ENCODE measurements at regions of chr21 and their contacts with region 1.

Region 1: GRCh38 chr21:39601187-39601928 is 11.4 kb upstream of the B3GALT5 start:
- DNase-seq: no peak
- ATAC-seq: peak in 3 of 4 donors; percentile 48 to 77 (median 51)
- H3K4me3 ChIP-seq: no peak overlapping the region
- H3K27ac ChIP-seq: no peak overlapping the region
- H3K4me1 ChIP-seq: peaks cover 0 to 5% (median 0%) of the 10 kb centered on the region in 12 donors
- H3K27me3 ChIP-seq: no peaks in the 10 kb centered on the region
- CTCF ChIP-seq: no peak
- POLR2A ChIP-seq: no peak

Region 2: GRCh38 chr21:39633770-39634181 is 32.4 kb after region 1 on chr21:
- intact Hi-C with region 1: no loop called
- DNase-seq: no peak
- ATAC-seq: no peak
- H3K4me3 ChIP-seq: no peak overlapping the region
- H3K27ac ChIP-seq: no peak overlapping the region
- H3K4me1 ChIP-seq: no peaks in the 10 kb centered on the region
- H3K27me3 ChIP-seq: peaks cover 0 to 7% (median 0%) of the 10 kb centered on the region in 9 donors
- CTCF ChIP-seq: no peak
- POLR2A ChIP-seq: no peak

Region 3: DNA sequence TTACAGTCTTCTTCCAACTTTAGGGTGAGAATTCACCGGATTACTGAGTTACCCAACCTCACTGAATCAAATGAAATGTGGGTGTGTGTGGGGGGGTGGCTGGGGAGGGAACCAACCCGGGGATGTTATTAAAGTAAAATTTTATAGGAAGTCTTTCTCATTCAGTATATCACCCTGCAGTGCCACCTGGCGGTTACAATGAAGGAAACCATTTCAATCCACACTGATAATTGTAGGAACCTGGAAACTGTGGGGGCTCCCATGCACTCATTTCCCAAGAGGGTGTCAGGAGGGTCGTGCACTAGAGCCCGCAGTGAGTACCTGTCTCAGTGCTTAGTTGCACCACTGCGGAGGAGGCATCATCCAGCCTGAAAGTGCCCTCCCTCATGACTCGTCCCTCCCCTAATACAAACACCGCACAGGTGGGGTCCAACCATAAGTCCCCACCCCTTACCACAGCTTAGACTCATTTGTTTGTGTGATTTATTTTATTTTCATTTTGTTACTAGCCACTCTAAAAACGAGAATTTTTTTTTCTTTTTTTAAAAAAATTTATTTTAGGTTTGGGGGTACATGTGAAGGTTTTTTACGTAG is 114.5 kb after region 1 on chr21:
- intact Hi-C with region 1: loop called in 1 of 10 experiments (anchors 10 kb)
- DNase-seq: peak in 4 of 5 donors; percentile 29 to 55 (median 33)
- ATAC-seq: peak in 2 of 4 donors; percentile 38
- H3K4me3 ChIP-seq: no peak overlapping the region
- H3K27ac ChIP-seq: no peak overlapping the region
- H3K4me1 ChIP-seq: peaks cover 0 to 5% (median 0%) of the 10 kb centered on the region in 12 donors
- H3K27me3 ChIP-seq: no peaks in the 10 kb centered on the region
- CTCF ChIP-seq: peak; percentile 53 to 81 (median 68)
- POLR2A ChIP-seq: no peak

Region 4: DNA sequence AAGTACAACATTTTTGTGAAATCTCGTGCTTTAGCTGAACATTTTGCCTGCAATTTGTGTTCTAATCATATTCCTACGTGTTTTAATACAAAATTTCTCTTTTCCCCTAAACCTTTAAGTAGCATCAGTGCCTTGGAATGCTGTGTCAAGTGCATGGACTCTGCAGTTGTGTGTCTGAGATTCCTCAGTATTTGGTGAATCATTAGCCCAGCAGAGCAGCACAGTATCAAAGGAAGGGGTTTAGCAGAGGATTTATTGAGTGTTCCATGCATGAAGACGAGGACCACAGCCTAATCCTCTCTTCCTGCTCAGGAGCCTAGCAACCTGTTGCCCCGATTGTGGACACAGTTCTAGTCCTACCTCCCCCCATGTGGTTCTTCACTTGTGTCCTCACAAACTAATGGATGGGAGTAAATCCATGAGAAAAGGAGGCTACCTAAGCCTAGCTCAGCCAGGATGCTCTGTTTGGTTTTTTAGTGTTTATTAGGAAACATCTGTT is 236.6 kb after region 1 on chr21:
- intact Hi-C with region 1: no loop called
- DNase-seq: no peak
- ATAC-seq: no peak
- H3K4me3 ChIP-seq: no peak overlapping the region
- H3K27ac ChIP-seq: no peak overlapping the region
- H3K4me1 ChIP-seq: no peaks in the 10 kb centered on the region
- H3K27me3 ChIP-seq: no peaks in the 10 kb centered on the region
- CTCF ChIP-seq: no peak
- POLR2A ChIP-seq: no peak

Measured in heart left ventricle (tissue), 16 donors.